Activated naive CD4-positive, alpha-beta T cell treated with anti-CD3 and anti-CD28 coated beads for 36 hours (primary cell): ENCODE measurements at regions of chr12 and their contacts with region 1.

Region 1: GRCh38 chr12:76455582-76456345 is 103.8 kb downstream of the OSBPL8 start:
- DNase-seq: peak; percentile 52
- H3K4me3 Mint-ChIP-seq: no peak overlapping the region
- H3K27ac Mint-ChIP-seq: no peak overlapping the region
- H3K4me1 Mint-ChIP-seq: peaks cover 15% of the 10 kb centered on the region
- H3K27me3 Mint-ChIP-seq: no peaks in the 10 kb centered on the region

Region 2: GRCh38 chr12:75334384-75335030 is 1121.3 kb before region 1 on chr12 and contains the start of gene GLIPR1L1:
- CTCF ChIA-PET with region 1: no interaction called
- intact Hi-C with region 1: loop called (anchors 5 kb)
- DNase-seq: peak; percentile 92
- H3K4me3 Mint-ChIP-seq: peak within 1 kb of the TSS; percentile 44
- H3K27ac Mint-ChIP-seq: no peak within 1 kb of the TSS
- H3K4me1 Mint-ChIP-seq: peaks cover 18% of the 10 kb centered on the region
- H3K27me3 Mint-ChIP-seq: peaks cover 32% of the 10 kb centered on the region
- total RNA-seq, gene GLIPR1L1: not detected

Region 3: DNA sequence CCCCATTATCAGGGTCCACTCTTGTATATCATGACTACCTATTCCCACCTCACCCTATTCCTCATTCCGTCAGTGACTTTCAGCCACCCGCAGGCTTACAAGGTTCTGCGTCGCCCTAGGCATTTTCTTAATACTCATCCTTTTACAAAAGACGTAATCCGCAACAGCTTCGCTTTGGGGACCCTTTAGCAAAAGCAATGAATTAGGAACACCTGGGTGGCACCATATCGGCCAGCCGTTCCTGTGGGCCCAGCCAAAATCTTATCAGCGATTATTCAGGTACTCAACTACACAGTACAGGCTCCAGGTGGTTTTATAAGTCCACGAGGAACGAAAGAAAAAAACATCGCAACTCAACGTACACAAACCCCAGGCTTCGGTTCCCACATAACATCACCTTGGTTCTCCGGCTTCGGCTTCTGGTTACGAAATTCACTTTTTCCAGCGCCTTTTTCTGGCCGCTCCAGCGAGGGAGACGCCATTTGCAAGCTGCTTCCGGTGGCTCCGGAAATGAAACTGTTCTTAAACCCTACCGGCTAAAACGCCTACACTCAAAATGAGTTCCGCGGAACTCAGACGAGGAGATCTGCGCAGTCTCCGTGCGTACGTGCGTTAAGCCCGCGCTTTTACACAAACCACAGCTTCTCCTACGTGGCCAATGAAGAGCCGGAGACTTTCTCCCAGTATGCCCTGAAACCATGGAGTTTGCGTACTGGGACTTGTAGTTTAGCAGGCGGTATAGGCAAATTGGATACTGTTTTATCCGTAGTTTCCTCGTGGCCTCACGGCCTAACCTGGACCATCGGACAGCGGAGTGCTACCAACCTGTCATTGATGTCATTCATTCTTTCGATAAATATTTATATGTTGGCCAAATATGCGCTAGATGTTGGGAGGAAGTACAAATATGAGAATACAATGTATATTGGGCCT is 944.4 kb before region 1 on chr12 and contains the start of gene KRR1:
- CTCF ChIA-PET with region 1: interaction called, 4 read pairs
- intact Hi-C with region 1: loop called (anchors 5 kb)
- DNase-seq: peak; percentile 95
- H3K4me3 Mint-ChIP-seq: peak within 1 kb of the TSS; percentile 95
- H3K27ac Mint-ChIP-seq: peak within 1 kb of the TSS; percentile 98
- H3K4me1 Mint-ChIP-seq: peaks cover 29% of the 10 kb centered on the region
- H3K27me3 Mint-ChIP-seq: no peaks in the 10 kb centered on the region
- total RNA-seq, gene KRR1: 81.1 to 83.9 TPM

Region 4: DNA sequence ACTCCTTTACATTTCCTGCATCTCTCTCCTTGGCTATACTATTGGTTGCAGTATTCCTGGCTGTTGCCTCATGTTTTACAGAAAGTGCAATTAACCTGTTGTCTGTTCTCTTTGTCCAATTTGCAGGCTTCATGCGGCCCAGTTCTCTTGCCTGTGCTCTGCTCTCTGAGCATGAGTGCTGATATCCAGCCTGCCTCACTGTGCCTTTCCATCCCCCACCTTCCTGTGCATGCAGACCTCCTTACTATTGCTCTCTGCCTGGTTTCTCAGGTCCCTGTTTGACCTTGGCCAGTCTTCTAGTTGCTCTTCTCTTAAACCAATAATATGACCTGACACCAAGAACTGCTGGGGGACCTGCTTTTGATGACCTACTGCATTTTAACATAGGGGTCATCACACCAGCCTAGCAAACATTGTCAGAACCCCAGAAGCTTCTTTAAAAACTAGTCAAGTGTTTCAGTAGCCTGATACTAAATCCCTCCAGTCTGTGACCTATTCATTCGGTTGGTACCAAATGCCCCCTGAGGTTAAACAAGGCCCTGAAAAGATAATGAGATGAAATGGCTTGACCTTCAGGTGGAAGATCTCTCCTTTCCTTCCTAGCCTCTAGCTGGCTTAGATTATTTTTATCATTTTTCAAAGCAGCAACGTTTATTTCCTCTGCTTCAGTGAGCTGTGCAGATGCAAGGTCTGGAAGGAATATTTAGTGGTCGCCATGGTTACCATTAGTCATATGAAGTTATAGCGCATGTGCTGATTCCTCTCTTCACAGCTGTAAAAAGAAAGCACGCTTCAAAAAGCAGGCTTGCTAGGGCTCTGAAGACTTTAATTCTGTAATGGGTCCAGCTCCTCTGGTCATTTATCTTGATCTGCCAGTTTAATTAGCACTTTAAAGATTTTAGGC is 640.7 kb before region 1 on chr12:
- CTCF ChIA-PET with region 1: no interaction called
- intact Hi-C with region 1: loop called (anchors 2 kb)
- DNase-seq: no peak
- H3K4me3 Mint-ChIP-seq: no peak overlapping the region
- H3K27ac Mint-ChIP-seq: no peak overlapping the region
- H3K4me1 Mint-ChIP-seq: no peaks in the 10 kb centered on the region
- H3K27me3 Mint-ChIP-seq: no peaks in the 10 kb centered on the region

Region 5: DNA sequence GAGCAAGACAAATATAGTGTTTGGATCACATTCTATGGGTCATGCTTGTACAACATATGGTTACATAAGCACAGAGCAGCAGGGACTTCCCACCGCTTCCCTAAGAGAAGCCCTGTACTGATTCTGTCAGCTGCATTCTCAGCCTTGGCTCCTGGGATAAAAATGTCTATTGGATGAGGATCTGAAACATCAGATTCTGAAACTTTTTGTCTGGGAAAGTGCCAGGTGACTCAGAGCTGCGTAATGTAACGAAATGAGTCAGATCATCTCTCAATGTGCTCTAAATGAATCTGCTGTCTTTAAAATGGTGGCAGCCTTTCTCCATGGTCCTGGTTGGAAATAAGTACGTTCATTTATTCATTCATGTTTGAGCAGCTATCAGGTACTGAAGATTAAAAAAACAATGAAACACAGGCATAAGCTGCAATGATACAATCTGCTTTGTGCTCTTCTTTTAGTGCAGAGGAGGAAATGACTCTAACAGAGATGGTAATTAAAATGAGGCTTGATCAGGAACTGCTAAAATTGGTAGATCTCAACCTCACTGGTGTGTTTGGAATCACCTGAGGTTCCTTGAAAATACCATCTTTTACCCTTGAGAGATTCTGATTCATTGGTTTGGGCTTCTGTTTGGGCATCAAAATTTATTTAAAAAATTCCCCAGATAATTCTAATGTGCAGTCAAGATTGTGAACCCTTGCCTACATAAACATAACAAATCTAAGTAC is 272.1 kb before region 1 on chr12:
- CTCF ChIA-PET with region 1: no interaction called
- intact Hi-C with region 1: loop called (anchors 5 kb)
- DNase-seq: peak; percentile 76
- H3K4me3 Mint-ChIP-seq: no peak overlapping the region
- H3K27ac Mint-ChIP-seq: no peak overlapping the region
- H3K4me1 Mint-ChIP-seq: peaks cover 12% of the 10 kb centered on the region
- H3K27me3 Mint-ChIP-seq: peaks cover 46% of the 10 kb centered on the region

Region 6: GRCh38 chr12:76444408-76444984 is 11.3 kb before region 1 on chr12:
- CTCF ChIA-PET with region 1: interaction called, 11 read pairs
- intact Hi-C with region 1: loop called (anchors 1 kb)
- DNase-seq: peak; percentile 20
- H3K4me3 Mint-ChIP-seq: no peak overlapping the region
- H3K27ac Mint-ChIP-seq: no peak overlapping the region
- H3K4me1 Mint-ChIP-seq: peaks cover 37% of the 10 kb centered on the region
- H3K27me3 Mint-ChIP-seq: no peaks in the 10 kb centered on the region

Region 7: GRCh38 chr12:76586764-76587395 is 131.1 kb after region 1 on chr12:
- CTCF ChIA-PET with region 1: interaction called, 19 read pairs
- intact Hi-C with region 1: loop called (anchors 2 kb)
- DNase-seq: peak; percentile 56
- H3K4me3 Mint-ChIP-seq: no peak overlapping the region
- H3K27ac Mint-ChIP-seq: no peak overlapping the region
- H3K4me1 Mint-ChIP-seq: no peaks in the 10 kb centered on the region
- H3K27me3 Mint-ChIP-seq: no peaks in the 10 kb centered on the region

Region 8: GRCh38 chr12:76706101-76706500 is 250.3 kb after region 1 on chr12:
- CTCF ChIA-PET with region 1: no interaction called
- intact Hi-C with region 1: no loop called
- DNase-seq: no peak
- H3K4me3 Mint-ChIP-seq: no peak overlapping the region
- H3K27ac Mint-ChIP-seq: no peak overlapping the region
- H3K4me1 Mint-ChIP-seq: peaks cover 5% of the 10 kb centered on the region
- H3K27me3 Mint-ChIP-seq: no peaks in the 10 kb centered on the region

Region 9: GRCh38 chr12:76866726-76867125 is 411.0 kb after region 1 on chr12:
- CTCF ChIA-PET with region 1: no interaction called
- intact Hi-C with region 1: no loop called
- DNase-seq: no peak
- H3K4me3 Mint-ChIP-seq: no peak overlapping the region
- H3K27ac Mint-ChIP-seq: no peak overlapping the region
- H3K4me1 Mint-ChIP-seq: no peaks in the 10 kb centered on the region
- H3K27me3 Mint-ChIP-seq: peaks cover 3% of the 10 kb centered on the region